Dendritic cell treated with granulocyte-macrophage colony-stimulating factor and Interleukin-4, amounts not matched to agents 40 ng/mL and 50 ng/mL, for 4 days (primary cell): ENCODE measurements at regions of chr11 and their contacts with region 1.

Region 1: GRCh38 chr11:34653826-34654490 is 33.1 kb downstream of the EHF start:
- H3K4me3 Mint-ChIP-seq: no peak overlapping the region
- H3K27ac Mint-ChIP-seq: peak overlapping the region; percentile 71
- H3K4me1 Mint-ChIP-seq: peaks cover 69% of the 10 kb centered on the region
- H3K27me3 Mint-ChIP-seq: no peaks in the 10 kb centered on the region

Region 2: DNA sequence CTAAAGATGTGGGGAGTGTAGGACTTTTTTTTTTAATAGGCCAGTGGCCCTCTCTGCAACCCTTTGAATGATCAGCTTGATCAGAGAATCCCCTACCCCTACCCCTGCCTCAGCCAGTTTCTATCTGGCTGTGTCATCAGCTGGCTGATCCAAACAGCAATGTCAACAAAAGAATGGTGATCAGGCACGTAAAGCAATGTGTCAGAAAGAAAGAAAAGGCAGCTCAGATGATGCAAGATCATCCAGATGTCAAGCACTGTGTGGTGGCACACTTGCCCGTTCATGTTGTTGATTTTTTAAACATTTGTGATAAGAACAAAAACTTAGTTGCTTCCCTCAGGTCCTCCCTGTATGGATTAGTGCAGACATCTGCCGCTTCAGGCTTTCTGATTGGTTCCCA is 59.4 kb before region 1 on chr11:
- intact Hi-C with region 1: loop called (anchors 5 kb)
- H3K4me3 Mint-ChIP-seq: no peak overlapping the region
- H3K27ac Mint-ChIP-seq: no peak overlapping the region
- H3K4me1 Mint-ChIP-seq: peaks cover 63% of the 10 kb centered on the region
- H3K27me3 Mint-ChIP-seq: peaks cover 2% of the 10 kb centered on the region

Region 3: GRCh38 chr11:34614344-34615104 is 39.4 kb before region 1 on chr11:
- intact Hi-C with region 1: loop called (anchors 5 kb)
- H3K4me3 Mint-ChIP-seq: peak overlapping the region; percentile 20
- H3K27ac Mint-ChIP-seq: peak overlapping the region; percentile 84
- H3K4me1 Mint-ChIP-seq: peaks cover 85% of the 10 kb centered on the region
- H3K27me3 Mint-ChIP-seq: no peaks in the 10 kb centered on the region